ENCODE measurements at regions of chr3 and their contacts with region 1.

Region 1: DNA sequence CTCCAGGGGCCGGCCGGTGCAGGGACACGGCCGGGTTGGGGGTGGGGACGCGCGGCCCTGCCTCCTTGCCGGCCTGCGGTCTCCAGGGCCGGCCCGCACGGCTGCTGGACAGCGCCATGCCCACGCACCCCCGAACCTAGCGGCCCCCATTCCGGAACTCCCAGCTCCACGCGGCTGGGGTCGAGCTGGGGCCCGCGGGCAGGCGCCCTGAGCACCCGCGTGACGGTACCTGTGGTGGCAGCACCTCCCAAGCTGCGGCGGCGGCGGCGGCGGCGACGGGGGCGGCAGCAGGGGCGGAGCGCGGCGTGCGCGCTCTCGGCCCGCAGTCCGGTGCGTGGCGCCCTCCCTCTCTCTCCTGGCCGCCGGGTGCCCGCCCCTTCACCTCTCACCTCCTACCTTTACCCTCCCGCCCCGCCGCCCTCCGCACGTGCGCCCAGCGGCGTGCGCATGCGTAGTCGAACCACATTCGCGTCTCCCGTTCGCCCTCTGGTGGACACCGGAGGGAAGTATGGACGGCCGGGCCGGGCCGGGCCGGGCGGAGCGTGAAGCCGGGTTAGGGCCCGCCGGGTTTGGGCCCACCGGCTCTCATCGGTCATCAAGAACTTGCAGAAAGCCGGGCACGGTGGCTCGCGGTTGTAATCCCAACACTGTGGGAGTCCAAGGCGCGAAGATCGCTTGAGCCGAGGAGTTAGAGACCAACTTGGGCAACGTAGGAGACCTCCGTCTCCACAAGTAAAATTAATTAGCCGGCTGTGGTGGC is at the start of gene SCAP:
- DNase-seq: peak; percentile 97
- ATAC-seq: peak; percentile 94
- H3K4me3 ChIP-seq: peak within 1 kb of the TSS; percentile 68 to 94 (median 81)
- H3K4me3 Mint-ChIP-seq: peak within 1 kb of the TSS; percentile 93
- H3K27ac ChIP-seq: peak within 1 kb of the TSS; percentile 80 to 81
- H3K27ac Mint-ChIP-seq: peak within 1 kb of the TSS; percentile 97
- H3K4me1 ChIP-seq: peaks cover 15 to 24% of the 10 kb centered on the region in 2 donors
- H3K4me1 Mint-ChIP-seq: peaks cover 34% of the 10 kb centered on the region
- H3K27me3 ChIP-seq: no peaks in the 10 kb centered on the region
- H3K27me3 Mint-ChIP-seq: no peaks in the 10 kb centered on the region
- CTCF ChIP-seq: peak; percentile 97
- total RNA-seq, gene SCAP: 100.0 and 113 TPM in 2 replicates

Region 2: DNA sequence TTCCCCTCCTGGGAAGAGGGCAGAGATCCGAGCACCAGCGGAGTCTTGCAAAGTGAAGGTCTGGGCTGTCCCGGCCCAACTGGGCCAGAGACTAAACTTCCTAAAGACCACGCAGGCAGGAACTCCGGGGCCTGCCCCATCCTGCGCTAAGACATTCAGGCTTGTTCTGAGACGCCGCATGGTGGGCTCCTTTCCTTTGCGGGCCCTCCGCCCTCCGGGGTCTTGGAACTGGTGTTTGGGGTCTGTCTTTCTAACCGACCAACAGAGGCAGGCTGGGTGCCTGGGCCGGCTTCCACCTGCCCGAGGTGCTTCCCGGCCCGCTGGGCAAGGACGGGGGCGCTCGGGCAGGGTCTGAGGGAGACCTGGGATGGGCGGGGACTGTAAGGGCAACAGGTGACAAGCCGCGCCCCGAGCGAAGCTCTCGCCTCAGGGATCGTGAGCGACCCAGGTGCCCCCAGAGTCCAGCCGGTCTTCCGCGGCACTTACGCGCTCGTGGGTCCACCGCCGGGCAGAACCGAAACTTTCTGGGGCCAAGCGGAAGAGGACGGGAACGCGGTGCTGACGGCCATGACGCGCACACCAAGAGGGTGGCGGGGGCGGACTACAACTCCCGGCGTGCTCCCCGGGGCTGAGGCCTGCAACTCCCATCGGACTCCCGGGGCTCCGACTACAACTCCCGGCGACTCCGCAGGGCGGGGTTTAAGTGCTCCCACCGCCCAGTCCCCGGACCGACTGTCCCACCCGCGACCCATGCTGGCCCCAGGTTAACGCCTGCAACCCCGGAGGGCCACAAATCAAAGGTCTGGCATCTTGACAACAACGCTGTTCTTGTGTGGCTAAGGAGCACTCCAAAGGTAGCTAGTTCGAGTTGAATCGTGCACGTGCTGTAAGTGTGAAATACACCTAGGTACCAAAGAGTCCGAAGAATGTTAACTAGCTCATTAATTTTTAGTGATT is 1480.2 kb before region 1 on chr3 and contains the start of gene FYCO1:
- CTCF ChIA-PET with region 1: no interaction called
- POLR2A ChIA-PET with region 1: no interaction called
- intact Hi-C with region 1: loop called (anchors 5 kb)
- DNase-seq: peak; percentile 91
- ATAC-seq: peak; percentile 95
- H3K4me3 ChIP-seq: peak within 1 kb of the TSS; percentile 62 to 98 (median 92)
- H3K4me3 Mint-ChIP-seq: peak within 1 kb of the TSS; percentile 89
- H3K27ac ChIP-seq: peak within 1 kb of the TSS; percentile 88 to 92
- H3K27ac Mint-ChIP-seq: peak within 1 kb of the TSS; percentile 92
- H3K4me1 ChIP-seq: peaks cover 25 to 49% of the 10 kb centered on the region in 2 donors
- H3K4me1 Mint-ChIP-seq: peaks cover 36% of the 10 kb centered on the region
- H3K27me3 ChIP-seq: peaks cover 0 to 4% (median 1%) of the 10 kb centered on the region in 4 experiments
- H3K27me3 Mint-ChIP-seq: no peaks in the 10 kb centered on the region
- CTCF ChIP-seq: no peak
- total RNA-seq, gene FYCO1: 16.5 and 16.7 TPM in 2 replicates

Region 3: DNA sequence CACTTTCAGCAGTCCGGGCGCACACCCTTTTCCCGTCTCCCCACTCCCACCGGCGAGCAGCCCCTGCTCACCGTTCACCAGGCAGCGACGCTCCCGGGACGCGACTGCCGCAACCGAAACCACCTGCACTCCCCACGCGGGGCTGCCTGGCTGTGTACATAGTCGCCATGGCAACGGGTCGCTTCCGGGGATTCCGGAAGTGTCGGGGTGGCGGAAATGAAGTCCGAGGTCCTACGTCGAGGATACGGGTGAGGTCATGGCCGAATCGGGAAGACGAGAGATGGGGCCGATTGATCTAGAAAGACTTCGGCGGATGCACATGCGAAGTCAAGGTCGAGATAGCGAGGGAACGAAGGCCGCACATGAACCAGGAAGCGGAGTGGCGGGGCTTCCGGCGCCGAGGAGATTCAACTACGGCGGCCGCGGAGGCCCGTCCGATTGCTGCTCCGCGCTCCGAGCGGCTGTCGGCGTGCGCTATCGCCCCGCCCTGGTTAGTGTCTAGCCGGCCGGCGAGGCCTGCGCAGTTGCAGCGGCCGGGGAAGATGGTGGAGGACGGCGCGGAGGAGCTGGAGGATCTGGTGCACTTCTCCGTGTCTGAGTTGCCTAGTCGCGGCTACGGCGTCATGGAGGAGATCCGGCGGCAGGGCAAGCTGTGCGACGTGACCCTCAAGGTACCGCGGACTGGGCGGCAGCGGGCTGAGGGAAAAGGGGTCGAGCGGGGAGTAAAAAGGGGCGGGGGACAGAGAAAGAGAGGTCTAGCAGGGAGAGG is 193.1 kb before region 1 on chr3 and contains the starts of genes KIF9 and KLHL18:
- CTCF ChIA-PET with region 1: no interaction called
- POLR2A ChIA-PET with region 1: no interaction called
- intact Hi-C with region 1: loop called (anchors 2 kb)
- DNase-seq: peak; percentile 100
- ATAC-seq: peak; percentile 85
- H3K4me3 ChIP-seq: peak within 1 kb of the TSS; percentile 74 to 98 (median 89)
- H3K4me3 Mint-ChIP-seq: peak within 1 kb of the TSS; percentile 99
- H3K27ac ChIP-seq: peak within 1 kb of the TSS; percentile 99
- H3K27ac Mint-ChIP-seq: peak within 1 kb of the TSS; percentile 100
- H3K4me1 ChIP-seq: peaks cover 33 to 49% of the 10 kb centered on the region in 2 donors
- H3K4me1 Mint-ChIP-seq: peaks cover 45% of the 10 kb centered on the region
- H3K27me3 ChIP-seq: no peaks in the 10 kb centered on the region
- H3K27me3 Mint-ChIP-seq: no peaks in the 10 kb centered on the region
- CTCF ChIP-seq: no peak
- total RNA-seq, gene KIF9: 1.3 and 3.0 TPM in 2 replicates
- total RNA-seq, gene KLHL18: 30.9 and 33.0 TPM in 2 replicates

Region 4: DNA sequence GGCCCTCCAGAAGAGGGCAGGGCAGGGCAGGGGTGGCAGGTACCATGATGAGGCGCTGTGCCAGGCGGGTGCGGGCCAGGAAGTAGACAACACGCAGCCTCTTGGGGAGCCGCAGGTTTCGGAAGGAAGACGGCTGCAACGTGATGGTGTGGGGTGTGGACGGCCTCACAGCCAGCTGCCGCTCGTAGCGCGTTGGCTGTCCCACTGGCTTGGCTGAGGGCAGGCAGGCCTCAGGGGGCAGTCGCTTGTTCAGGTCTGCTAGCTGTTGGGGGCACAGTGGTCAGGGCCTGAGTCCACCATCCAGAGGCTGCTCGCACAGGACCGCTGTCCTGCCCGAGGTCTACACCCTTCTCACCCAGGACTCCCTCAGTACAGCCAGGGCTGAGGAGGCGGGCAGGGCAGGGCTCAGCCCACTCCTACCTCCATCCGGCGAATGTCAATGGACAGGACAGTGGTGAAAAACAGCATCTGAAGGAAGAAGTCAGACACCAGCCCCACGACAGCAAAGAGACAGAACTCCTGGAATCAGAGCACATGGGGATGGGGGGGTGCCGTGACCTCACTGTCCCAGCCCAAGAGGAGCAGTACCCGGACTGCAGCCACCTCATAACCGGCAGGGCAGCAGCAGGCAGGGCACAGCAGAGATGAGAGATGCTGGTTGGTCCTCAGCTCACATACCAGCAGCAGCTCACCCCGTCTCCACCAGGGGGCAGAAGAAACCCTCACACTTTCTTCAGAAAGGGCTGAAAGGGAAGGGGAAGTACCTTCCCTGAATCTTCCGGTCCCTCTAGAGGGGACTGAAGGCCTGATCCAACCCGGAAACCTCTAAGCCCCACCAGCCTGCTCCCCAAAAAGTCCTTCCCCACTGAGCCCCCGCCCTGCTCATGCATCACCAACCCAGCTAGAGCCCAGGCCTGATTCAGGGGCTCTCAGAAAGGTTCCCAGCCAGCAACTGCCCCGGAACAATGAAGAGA is 55.0 kb before region 1 on chr3:
- CTCF ChIA-PET with region 1: interaction called, 36 read pairs
- POLR2A ChIA-PET with region 1: interaction called, 4 read pairs
- intact Hi-C with region 1: loop called (anchors 1 kb)
- DNase-seq: peak; percentile 92
- ATAC-seq: peak; percentile 98
- H3K4me3 ChIP-seq: peak overlapping the region in 2 of 5 experiments; percentile 8 to 9
- H3K4me3 Mint-ChIP-seq: peak overlapping the region; percentile 76
- H3K27ac ChIP-seq: peak overlapping the region; percentile 77 to 87
- H3K27ac Mint-ChIP-seq: peak overlapping the region; percentile 99
- H3K4me1 ChIP-seq: peaks cover 11 to 12% of the 10 kb centered on the region in 2 donors
- H3K4me1 Mint-ChIP-seq: peaks cover 14% of the 10 kb centered on the region
- H3K27me3 ChIP-seq: no peaks in the 10 kb centered on the region
- H3K27me3 Mint-ChIP-seq: no peaks in the 10 kb centered on the region
- CTCF ChIP-seq: peak; percentile 89

Region 5: DNA sequence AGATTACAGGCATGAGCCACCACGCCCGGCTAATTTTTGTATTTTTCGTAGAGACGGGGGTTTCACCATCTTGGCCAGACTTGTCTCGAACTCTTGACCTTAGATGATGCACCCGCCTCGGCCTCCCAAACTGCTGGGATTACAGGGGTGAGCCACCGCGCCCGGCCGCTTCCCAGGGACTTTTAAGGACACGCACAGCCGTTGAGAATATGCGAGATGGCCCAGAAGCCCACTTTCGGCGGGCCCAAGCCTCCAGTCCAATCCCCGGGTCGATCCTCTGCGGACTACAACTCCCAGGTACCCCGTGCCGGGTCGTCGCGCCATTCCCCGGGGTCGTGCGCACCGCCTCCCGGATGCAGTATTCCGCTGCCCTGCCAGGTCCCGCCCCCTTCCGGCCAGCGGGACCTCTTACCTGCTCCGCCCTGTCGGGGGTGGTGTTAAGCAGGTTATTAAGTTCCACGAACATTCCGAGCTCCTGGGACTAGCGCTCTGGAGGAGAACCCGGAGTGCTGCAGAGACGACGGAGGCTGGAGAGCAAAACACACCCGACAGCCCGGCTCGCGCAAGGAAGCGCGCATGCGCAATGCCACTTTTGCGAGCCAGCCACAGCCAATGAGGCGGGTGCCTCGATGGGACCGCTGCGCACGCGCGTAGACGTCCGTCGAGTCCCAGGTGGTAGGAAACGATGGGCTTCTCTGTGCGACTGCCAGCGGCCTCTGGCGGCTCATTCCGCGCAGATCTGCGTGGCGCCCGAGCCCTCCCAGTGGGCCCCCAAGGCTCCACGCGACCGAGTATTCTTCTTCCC is 37.6 kb after region 1 on chr3 and contains the start of gene ELP6:
- CTCF ChIA-PET with region 1: interaction called, 3 read pairs
- POLR2A ChIA-PET with region 1: no interaction called
- intact Hi-C with region 1: loop called (anchors 1 kb)
- DNase-seq: peak; percentile 99
- ATAC-seq: peak; percentile 93
- H3K4me3 ChIP-seq: peak within 1 kb of the TSS; percentile 79 to 91 (median 80)
- H3K4me3 Mint-ChIP-seq: peak within 1 kb of the TSS; percentile 99
- H3K27ac ChIP-seq: peak within 1 kb of the TSS; percentile 66 to 76
- H3K27ac Mint-ChIP-seq: peak within 1 kb of the TSS; percentile 99
- H3K4me1 ChIP-seq: peaks cover 0 to 9% of the 10 kb centered on the region in 2 donors
- H3K4me1 Mint-ChIP-seq: peaks cover 16% of the 10 kb centered on the region
- H3K27me3 ChIP-seq: no peaks in the 10 kb centered on the region
- H3K27me3 Mint-ChIP-seq: no peaks in the 10 kb centered on the region
- CTCF ChIP-seq: peak; percentile 67
- total RNA-seq, gene ELP6: 32.0 and 36.7 TPM in 2 replicates

Region 6: DNA sequence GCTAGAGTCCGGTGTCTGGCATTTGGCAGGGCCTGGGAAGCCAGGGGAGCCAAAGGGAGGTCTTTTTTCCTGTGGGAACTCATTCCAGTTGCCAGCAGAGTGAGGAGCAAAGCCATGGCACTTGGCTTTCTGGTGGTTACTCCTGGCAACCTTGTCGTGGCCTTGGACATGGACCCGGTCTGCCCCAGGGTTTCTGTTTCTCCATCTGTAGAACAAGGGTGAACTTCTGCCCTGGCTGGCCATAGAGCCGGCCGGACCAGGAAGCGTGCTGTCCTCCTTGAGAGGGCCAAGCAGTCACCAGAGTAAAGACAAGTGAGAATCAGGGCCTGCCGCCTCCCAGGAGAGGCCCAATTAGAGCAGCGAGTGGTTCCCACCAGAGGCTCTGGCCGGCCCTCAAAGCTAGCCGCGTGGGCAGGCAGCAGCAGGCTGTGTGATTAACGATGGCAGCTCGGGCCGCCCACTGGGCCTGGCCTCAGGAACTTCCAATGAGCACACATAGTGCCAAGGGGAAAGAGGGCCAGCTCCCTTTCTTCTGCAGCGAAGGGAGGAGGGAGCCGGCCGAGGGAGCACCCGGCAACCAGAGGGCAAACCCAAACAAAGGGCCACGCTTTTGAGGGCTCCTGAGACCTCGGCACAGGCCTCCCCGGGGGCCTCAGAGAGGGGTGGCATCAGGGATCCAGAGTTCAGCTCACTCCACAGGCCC is 66.9 kb after region 1 on chr3:
- CTCF ChIA-PET with region 1: no interaction called
- POLR2A ChIA-PET with region 1: no interaction called
- intact Hi-C with region 1: no loop called
- DNase-seq: no peak
- ATAC-seq: no peak
- H3K4me3 ChIP-seq: no peak overlapping the region
- H3K4me3 Mint-ChIP-seq: no peak overlapping the region
- H3K27ac ChIP-seq: no peak overlapping the region
- H3K27ac Mint-ChIP-seq: no peak overlapping the region
- H3K4me1 ChIP-seq: no peaks in the 10 kb centered on the region
- H3K4me1 Mint-ChIP-seq: no peaks in the 10 kb centered on the region
- H3K27me3 ChIP-seq: no peaks in the 10 kb centered on the region
- H3K27me3 Mint-ChIP-seq: peaks cover 12% of the 10 kb centered on the region
- CTCF ChIP-seq: no peak

Region 7: DNA sequence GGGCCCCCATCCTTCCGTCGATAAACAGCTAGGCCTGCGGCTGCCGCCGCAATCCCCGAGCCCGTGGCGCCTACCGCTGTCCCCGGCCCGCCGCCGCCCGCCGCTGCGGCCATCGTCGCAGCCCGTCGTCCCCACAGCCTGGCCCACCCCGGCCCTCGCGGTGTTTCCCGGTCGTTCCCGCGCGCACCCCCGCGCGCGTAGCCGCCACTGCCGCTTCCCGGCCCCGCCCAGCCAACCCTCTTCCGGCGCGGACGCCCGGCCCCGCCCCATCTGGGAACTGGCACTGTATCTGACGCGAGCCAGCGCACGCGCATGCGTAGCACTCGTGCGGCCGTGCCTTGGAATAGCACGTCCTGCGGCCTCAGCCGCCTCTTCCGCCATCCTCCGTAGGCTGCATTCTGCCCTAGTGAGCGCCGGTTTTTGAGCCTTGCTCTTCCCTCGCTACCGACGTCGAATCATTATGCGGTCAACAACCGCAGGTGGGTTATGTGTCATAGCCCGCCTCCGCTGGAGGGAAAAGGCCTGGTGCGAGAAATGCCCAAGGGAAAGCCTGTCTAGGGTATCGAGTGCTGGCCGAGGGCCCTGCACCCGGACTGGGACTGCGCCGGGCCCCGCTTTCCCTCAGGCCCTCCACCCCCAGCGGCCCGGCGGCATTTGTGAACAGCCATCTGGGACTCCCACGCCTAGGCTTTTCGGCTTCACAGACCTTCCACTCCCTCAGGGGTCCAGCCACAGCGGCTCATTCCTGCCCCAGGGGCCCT is 306.1 kb after region 1 on chr3 and contains the start of gene SMARCC1:
- CTCF ChIA-PET with region 1: no interaction called
- POLR2A ChIA-PET with region 1: no interaction called
- intact Hi-C with region 1: loop called (anchors 10 kb)
- DNase-seq: peak; percentile 99
- ATAC-seq: peak; percentile 87
- H3K4me3 ChIP-seq: peak within 1 kb of the TSS; percentile 68 to 94 (median 78)
- H3K4me3 Mint-ChIP-seq: peak within 1 kb of the TSS; percentile 99
- H3K27ac ChIP-seq: peak within 1 kb of the TSS; percentile 91 to 96
- H3K27ac Mint-ChIP-seq: peak within 1 kb of the TSS; percentile 99
- H3K4me1 ChIP-seq: peaks cover 32 to 44% of the 10 kb centered on the region in 2 donors
- H3K4me1 Mint-ChIP-seq: peaks cover 39% of the 10 kb centered on the region
- H3K27me3 ChIP-seq: no peaks in the 10 kb centered on the region
- H3K27me3 Mint-ChIP-seq: no peaks in the 10 kb centered on the region
- CTCF ChIP-seq: no peak
- total RNA-seq, gene SMARCC1: 149 and 155 TPM in 2 replicates

Measured in B cell (primary cell).